ENCODE measurements at regions of chr14 and their contacts with region 1.

Region 1: DNA sequence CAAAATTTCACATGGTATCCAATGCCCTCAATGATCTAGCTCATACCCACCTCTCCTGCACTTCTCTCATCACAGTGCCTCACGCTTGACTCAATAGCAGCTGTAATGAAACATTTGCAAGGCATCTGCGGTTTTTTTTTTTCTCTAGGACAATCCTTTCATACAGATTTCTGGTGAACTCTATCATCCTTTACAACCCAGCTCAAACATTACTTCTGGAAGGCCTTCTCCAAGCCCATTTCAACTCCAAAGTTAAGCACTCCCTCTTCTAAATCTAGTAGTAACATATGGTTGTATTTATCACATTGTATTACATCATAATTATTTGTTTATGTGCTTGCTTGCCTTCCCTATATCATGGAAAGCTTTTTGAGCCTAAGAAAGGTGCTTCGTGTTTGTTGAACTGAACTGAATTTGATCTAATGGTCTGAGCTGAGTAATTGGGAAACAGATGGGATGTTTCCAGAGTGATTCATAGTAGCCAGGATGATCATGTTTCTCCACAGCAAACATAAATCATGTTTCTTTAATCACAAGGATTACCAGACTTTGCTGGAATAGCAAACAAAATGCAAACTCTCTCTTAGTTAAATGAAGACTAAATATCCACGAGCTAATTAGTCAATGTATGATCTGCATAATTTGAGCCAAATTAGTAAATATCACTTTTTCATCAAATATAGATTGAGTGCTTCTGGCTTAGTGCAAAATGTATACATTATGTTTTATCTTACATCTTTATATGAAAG is 14.3 kb downstream of the CFL2 start:
- DNase-seq: peak; percentile 79
- H3K4me3 ChIP-seq: no peak overlapping the region
- H3K27ac ChIP-seq: peak overlapping the region; percentile 60
- H3K4me1 ChIP-seq: peaks cover 17% of the 10 kb centered on the region
- H3K27me3 ChIP-seq: no peaks in the 10 kb centered on the region
- CTCF ChIP-seq: no peak

Region 2: DNA sequence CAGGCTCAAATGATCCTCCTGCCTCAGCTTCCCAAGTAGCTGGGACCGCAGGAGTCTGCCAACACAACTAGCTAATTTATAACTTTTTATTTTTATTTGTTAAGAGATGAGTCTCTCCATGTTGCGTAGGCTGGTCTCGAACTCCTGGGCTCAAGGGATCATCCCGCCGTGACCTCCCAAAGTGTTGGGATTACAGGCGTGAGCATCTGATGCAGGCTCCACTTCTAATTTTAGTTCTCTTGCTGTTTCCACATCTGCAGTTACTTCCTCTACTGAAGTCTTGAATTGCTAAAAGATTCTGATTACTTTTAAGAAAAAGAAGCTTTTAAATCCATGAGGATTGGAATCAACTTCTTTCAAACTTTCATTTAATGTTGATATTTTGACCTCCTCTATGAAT is 56.7 kb before region 1 on chr14:
- CTCF ChIA-PET with region 1: no interaction called
- dilution Hi-C with region 1: no loop called
- in situ Hi-C with region 1: no loop called
- intact Hi-C with region 1: no loop called
- DNase-seq: no peak
- H3K4me3 ChIP-seq: no peak overlapping the region
- H3K27ac ChIP-seq: no peak overlapping the region
- H3K4me1 ChIP-seq: no peaks in the 10 kb centered on the region
- H3K27me3 ChIP-seq: no peaks in the 10 kb centered on the region
- CTCF ChIP-seq: no peak

Region 3: GRCh38 chr14:34714320-34715126 is 14.5 kb after region 1 on chr14 and contains the start of gene CFL2:
- CTCF ChIA-PET with region 1: no interaction called
- dilution Hi-C with region 1: no loop called
- in situ Hi-C with region 1: no loop called
- intact Hi-C with region 1: loop called (anchors 2 kb)
- DNase-seq: peak; percentile 71
- H3K4me3 ChIP-seq: peak within 1 kb of the TSS; percentile 68 to 87 (median 72)
- H3K27ac ChIP-seq: peak within 1 kb of the TSS; percentile 73
- H3K4me1 ChIP-seq: peaks cover 23% of the 10 kb centered on the region
- H3K27me3 ChIP-seq: no peaks in the 10 kb centered on the region
- CTCF ChIP-seq: no peak
- total RNA-seq, gene CFL2: 30.1 to 34.5 TPM